CD4-positive, alpha-beta memory T cell (primary cell): ENCODE measurements at regions of chr9 and their contacts with region 1.

Region 1: GRCh38 chr9:36190388-36191287 is at the start of gene CLTA:
- DNase-seq: peak; percentile 93 to 98 (median 95)
- H3K4me3 ChIP-seq: peak within 1 kb of the TSS; percentile 87 to 94
- H3K4me3 Mint-ChIP-seq: peak within 1 kb of the TSS; percentile 90 to 98 (median 94)
- H3K27ac ChIP-seq: peak within 1 kb of the TSS; percentile 91
- H3K27ac Mint-ChIP-seq: peak within 1 kb of the TSS; percentile 92 to 96 (median 96)
- H3K4me1 ChIP-seq: peaks cover 42% of the 10 kb centered on the region
- H3K4me1 Mint-ChIP-seq: peaks cover 36 to 57% (median 44%) of the 10 kb centered on the region in 4 donors
- H3K27me3 ChIP-seq: no peaks in the 10 kb centered on the region
- H3K27me3 Mint-ChIP-seq: peaks cover 0 to 1% of the 10 kb centered on the region in 2 donors
- total RNA-seq, gene CLTA: 69.9 to 72.3 TPM

Region 2: GRCh38 chr9:36142510-36143244 is 48.0 kb before region 1 on chr9:
- CTCF ChIA-PET with region 1: interaction called, 9 read pairs
- POLR2A ChIA-PET with region 1: interaction called, 16 read pairs
- intact Hi-C with region 1: no loop called
- DNase-seq: no peak
- H3K4me3 ChIP-seq: peak overlapping the region; percentile 50 to 58
- H3K4me3 Mint-ChIP-seq: peak overlapping the region; percentile 88 to 97 (median 92)
- H3K27ac ChIP-seq: peak overlapping the region; percentile 73
- H3K27ac Mint-ChIP-seq: peak overlapping the region; percentile 95 to 100 (median 98)
- H3K4me1 ChIP-seq: peaks cover 100% of the 10 kb centered on the region
- H3K4me1 Mint-ChIP-seq: peaks cover 80 to 100% (median 97%) of the 10 kb centered on the region in 4 donors
- H3K27me3 ChIP-seq: no peaks in the 10 kb centered on the region
- H3K27me3 Mint-ChIP-seq: no peaks in the 10 kb centered on the region

Region 3: DNA sequence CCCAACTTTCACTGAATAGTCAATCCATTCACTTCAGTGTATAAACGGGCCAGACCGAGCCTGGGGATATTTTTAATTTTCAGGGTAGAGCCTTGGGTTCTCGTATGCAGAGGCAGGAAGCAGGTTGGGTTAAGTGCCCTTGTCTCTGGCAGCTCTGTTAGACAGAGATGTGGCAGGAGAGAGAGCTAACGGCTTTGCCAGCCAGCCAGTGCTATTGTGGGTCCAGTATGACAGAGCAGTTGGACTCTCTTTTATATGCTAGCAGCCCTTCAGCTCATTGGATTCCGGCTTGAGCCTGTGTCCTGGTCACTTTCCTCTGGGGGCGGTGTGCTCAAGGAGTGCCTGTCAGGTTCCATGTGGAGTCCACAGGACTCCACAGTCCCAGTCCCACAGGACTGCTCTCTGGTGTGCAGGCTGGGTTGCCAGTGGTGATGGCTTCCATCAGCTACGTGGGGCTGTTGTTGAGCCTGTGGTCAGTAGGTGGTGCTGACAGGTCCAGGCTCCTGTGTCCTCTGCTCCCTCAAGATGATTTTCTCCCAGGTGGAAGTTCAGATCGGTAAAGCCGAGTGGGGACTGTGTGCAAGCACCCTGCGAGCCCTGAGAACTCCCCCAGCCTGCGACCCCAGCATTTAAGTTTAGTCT is 14.4 kb after region 1 on chr9:
- CTCF ChIA-PET with region 1: interaction called, 27 read pairs
- POLR2A ChIA-PET with region 1: interaction called, 14 read pairs
- intact Hi-C with region 1: no loop called
- DNase-seq: no peak
- H3K4me3 ChIP-seq: no peak overlapping the region
- H3K4me3 Mint-ChIP-seq: no peak overlapping the region
- H3K27ac ChIP-seq: no peak overlapping the region
- H3K27ac Mint-ChIP-seq: peak overlapping the region in 3 of 7 donors; percentile 46 to 64 (median 50)
- H3K4me1 ChIP-seq: peaks cover 32% of the 10 kb centered on the region
- H3K4me1 Mint-ChIP-seq: peaks cover 27 to 44% (median 32%) of the 10 kb centered on the region in 4 donors
- H3K27me3 ChIP-seq: no peaks in the 10 kb centered on the region
- H3K27me3 Mint-ChIP-seq: no peaks in the 10 kb centered on the region

Region 4: DNA sequence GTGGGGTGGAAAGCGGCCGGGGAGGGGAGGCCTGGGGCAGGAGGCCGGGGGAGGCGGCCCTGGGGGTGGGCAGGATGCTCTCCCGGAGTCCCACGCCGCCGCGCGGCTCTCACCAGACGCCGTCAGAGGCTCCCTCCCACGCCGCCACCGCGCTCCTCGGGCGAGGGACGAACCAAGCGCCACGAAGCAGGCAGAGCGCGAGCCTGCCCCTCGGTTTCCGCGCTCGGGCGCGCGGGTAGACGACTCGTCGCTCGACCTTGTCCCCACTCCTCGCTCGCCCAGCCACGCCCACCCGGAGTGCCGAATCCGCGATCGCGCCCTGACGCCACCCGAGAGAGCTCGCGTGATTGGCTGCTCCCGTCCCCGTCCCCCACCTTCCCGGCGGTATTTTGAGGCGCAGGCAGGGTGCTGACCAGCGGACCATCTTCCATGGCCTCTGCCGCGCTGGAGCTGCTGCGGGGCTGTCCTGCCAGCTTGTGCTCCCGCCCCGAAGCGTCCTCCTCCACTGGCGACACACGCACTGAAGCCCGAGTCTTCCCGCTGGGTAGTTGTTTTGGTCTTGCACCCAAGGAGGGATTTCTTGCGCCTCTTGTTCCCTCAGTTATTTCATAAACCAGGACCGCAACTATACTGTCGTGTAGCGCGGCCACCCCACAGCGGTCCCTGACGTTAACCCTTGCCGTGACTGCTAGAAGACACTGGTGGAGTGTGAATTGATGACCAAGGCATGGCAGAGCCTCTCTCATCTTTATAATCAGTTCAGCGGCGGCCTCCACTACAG is 67.8 kb after region 1 on chr9 and contains the start of gene GNE:
- CTCF ChIA-PET with region 1: interaction called, 9 read pairs
- POLR2A ChIA-PET with region 1: interaction called, 21 read pairs
- intact Hi-C with region 1: loop called (anchors 1 kb)
- DNase-seq: peak; percentile 95 to 98 (median 96)
- H3K4me3 ChIP-seq: peak within 1 kb of the TSS; percentile 62 to 96
- H3K4me3 Mint-ChIP-seq: peak within 1 kb of the TSS; percentile 96 to 100 (median 97)
- H3K27ac ChIP-seq: peak within 1 kb of the TSS; percentile 85
- H3K27ac Mint-ChIP-seq: peak within 1 kb of the TSS; percentile 96 to 99 (median 98)
- H3K4me1 ChIP-seq: peaks cover 16% of the 10 kb centered on the region
- H3K4me1 Mint-ChIP-seq: peaks cover 7 to 19% (median 11%) of the 10 kb centered on the region in 4 donors
- H3K27me3 ChIP-seq: no peaks in the 10 kb centered on the region
- H3K27me3 Mint-ChIP-seq: no peaks in the 10 kb centered on the region
- total RNA-seq, gene GNE: 16.9 to 18.1 TPM

Region 5: GRCh38 chr9:36400332-36401163 is 209.9 kb after region 1 on chr9:
- CTCF ChIA-PET with region 1: interaction called, 7 read pairs
- POLR2A ChIA-PET with region 1: no interaction called
- intact Hi-C with region 1: loop called (anchors 1 kb)
- DNase-seq: peak; percentile 89 to 93 (median 90)
- H3K4me3 ChIP-seq: peak overlapping the region; percentile 65 to 77
- H3K4me3 Mint-ChIP-seq: peak overlapping the region; percentile 92 to 97 (median 94)
- H3K27ac ChIP-seq: peak overlapping the region; percentile 97
- H3K27ac Mint-ChIP-seq: peak overlapping the region; percentile 92 to 100 (median 98)
- H3K4me1 ChIP-seq: peaks cover 45% of the 10 kb centered on the region
- H3K4me1 Mint-ChIP-seq: peaks cover 30 to 58% (median 44%) of the 10 kb centered on the region in 4 donors
- H3K27me3 ChIP-seq: no peaks in the 10 kb centered on the region
- H3K27me3 Mint-ChIP-seq: no peaks in the 10 kb centered on the region